ENCODE measurements at regions of chr6 and their contacts with region 1.

Region 1: DNA sequence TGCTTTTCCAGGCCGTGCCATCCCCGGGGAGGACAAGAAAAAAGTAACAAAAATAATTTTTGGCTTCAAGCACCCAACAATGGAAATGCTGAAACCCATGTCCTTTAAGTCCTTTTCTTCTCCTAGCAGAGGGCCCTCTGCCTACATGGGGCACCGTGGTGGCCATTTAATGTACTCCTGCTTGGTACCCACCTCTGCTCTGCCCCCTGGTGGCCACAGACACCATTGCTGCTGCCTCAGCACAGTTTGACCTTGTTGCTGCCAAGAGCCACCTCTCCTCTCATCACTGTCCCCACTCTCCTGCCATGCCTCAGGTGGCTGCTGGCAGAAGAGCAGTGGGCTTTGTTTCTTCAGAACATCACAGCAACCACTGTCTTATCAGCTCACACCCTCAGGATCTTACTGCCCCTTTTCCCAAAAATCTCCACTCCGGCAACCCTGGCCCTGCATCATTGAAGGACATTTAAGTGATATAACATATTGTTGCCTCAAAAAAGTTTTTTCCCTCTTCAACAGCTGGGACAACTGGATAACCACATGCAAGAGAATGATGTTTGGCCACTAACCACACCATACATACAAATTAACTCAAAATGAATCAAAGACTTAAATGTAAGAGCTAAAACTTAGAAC is 12.9 kb upstream of the ARMC2 start:
- DNase-seq: peak in 1 of 2 experiments; percentile 91
- H3K4me3 ChIP-seq: no peak overlapping the region
- H3K27ac ChIP-seq: no peak overlapping the region
- H3K4me1 ChIP-seq: peaks cover 3 to 8% (median 6%) of the 10 kb centered on the region in 4 experiments; a peak in 6 of 7 replicates
- H3K27me3 ChIP-seq: no peaks in the 10 kb centered on the region
- CTCF ChIP-seq: peak; percentile 93 to 99 (median 98)
- EP300 ChIP-seq: no peak
- POLR2A ChIP-seq: no peak
- RAD21 ChIP-seq: peak; percentile 87 to 92

Region 2: DNA sequence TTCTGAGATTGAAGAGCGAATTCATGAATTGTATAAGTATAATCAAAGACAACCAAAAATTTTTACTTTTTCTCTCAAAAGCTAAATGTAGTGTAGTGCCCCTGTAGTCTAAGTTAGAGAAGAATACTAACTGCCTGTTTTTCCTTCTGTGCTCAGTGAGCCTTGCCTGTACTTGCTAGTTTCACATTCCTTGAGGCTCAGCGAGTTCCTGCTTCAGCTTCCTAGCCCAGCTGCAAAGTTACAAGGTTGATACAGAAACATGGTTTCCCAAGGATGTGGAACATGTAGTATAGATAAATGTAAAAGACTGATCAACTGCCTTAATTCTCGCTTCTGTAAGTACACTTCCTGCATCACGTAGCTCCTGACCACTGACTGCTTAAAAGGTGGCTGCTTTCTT is 844.3 kb before region 1 on chr6:
- CTCF ChIA-PET with region 1: no interaction called
- POLR2A ChIA-PET with region 1: no interaction called
- DNase-seq: no peak
- H3K4me3 ChIP-seq: no peak overlapping the region
- H3K27ac ChIP-seq: no peak overlapping the region
- H3K4me1 ChIP-seq: peaks cover 0 to 19% (median 10%) of the 10 kb centered on the region in 4 experiments; a peak in 6 of 7 replicates
- H3K27me3 ChIP-seq: no peaks in the 10 kb centered on the region
- CTCF ChIP-seq: no peak
- EP300 ChIP-seq: no peak
- POLR2A ChIP-seq: no peak
- RAD21 ChIP-seq: no peak

Region 3: GRCh38 chr6:108531336-108531735 is 304.0 kb before region 1 on chr6:
- CTCF ChIA-PET with region 1: interaction called, 10 read pairs
- POLR2A ChIA-PET with region 1: no interaction called
- DNase-seq: no peak
- H3K4me3 ChIP-seq: no peak overlapping the region
- H3K27ac ChIP-seq: no peak overlapping the region
- H3K4me1 ChIP-seq: no peaks in the 10 kb centered on the region
- H3K27me3 ChIP-seq: no peaks in the 10 kb centered on the region
- CTCF ChIP-seq: peak; percentile 29 to 64 (median 60)
- EP300 ChIP-seq: no peak
- POLR2A ChIP-seq: no peak
- RAD21 ChIP-seq: peak; percentile 57 to 75

Region 4: GRCh38 chr6:108741331-108741989 is 93.9 kb before region 1 on chr6:
- CTCF ChIA-PET with region 1: no interaction called
- POLR2A ChIA-PET with region 1: no interaction called
- DNase-seq: no peak
- H3K4me3 ChIP-seq: no peak overlapping the region
- H3K27ac ChIP-seq: no peak overlapping the region
- H3K4me1 ChIP-seq: peaks cover 0 to 2% (median 1%) of the 10 kb centered on the region in 4 experiments; a peak in 3 of 7 replicates
- H3K27me3 ChIP-seq: peaks cover 0 to 3% (median 0%) of the 10 kb centered on the region in 4 experiments; a peak in 1 of 7 replicates
- CTCF ChIP-seq: no peak
- EP300 ChIP-seq: no peak
- POLR2A ChIP-seq: no peak
- RAD21 ChIP-seq: no peak

Region 5: GRCh38 chr6:108848116-108848868 is 13.0 kb after region 1 on chr6 and contains the start of gene ARMC2:
- CTCF ChIA-PET with region 1: interaction called, 39 read pairs
- POLR2A ChIA-PET with region 1: interaction called, 3 read pairs
- DNase-seq: peak; percentile 73 to 98
- H3K4me3 ChIP-seq: peak within 1 kb of the TSS; percentile 76 to 88 (median 81)
- H3K27ac ChIP-seq: 0 out of 2 replicates have a peak within 1 kb of the TSS, but pooled peaks have one; percentile 6
- H3K4me1 ChIP-seq: peaks cover 0 to 8% (median 0%) of the 10 kb centered on the region in 4 experiments; a peak in 2 of 7 replicates
- H3K27me3 ChIP-seq: no peaks in the 10 kb centered on the region
- CTCF ChIP-seq: no peak
- EP300 ChIP-seq: no peak
- POLR2A ChIP-seq: no peak
- RAD21 ChIP-seq: no peak
- total RNA-seq, gene ARMC2: 4.3 and 4.4 TPM in 2 replicates

Region 6: GRCh38 chr6:108883172-108883571 is 47.8 kb after region 1 on chr6:
- CTCF ChIA-PET with region 1: interaction called, 13 read pairs
- POLR2A ChIA-PET with region 1: interaction called, 3 read pairs
- DNase-seq: no peak
- H3K4me3 ChIP-seq: no peak overlapping the region
- H3K27ac ChIP-seq: no peak overlapping the region
- H3K4me1 ChIP-seq: no peaks in the 10 kb centered on the region
- H3K27me3 ChIP-seq: no peaks in the 10 kb centered on the region
- CTCF ChIP-seq: no peak
- EP300 ChIP-seq: no peak
- POLR2A ChIP-seq: no peak
- RAD21 ChIP-seq: no peak

Region 7: GRCh38 chr6:108896111-108896661 is 60.9 kb after region 1 on chr6:
- CTCF ChIA-PET with region 1: interaction called, 20 read pairs
- POLR2A ChIA-PET with region 1: no interaction called
- DNase-seq: no peak
- H3K4me3 ChIP-seq: no peak overlapping the region
- H3K27ac ChIP-seq: no peak overlapping the region
- H3K4me1 ChIP-seq: no peaks in the 10 kb centered on the region
- H3K27me3 ChIP-seq: no peaks in the 10 kb centered on the region
- CTCF ChIP-seq: no peak
- EP300 ChIP-seq: no peak
- POLR2A ChIP-seq: no peak
- RAD21 ChIP-seq: no peak

Region 8: GRCh38 chr6:109073344-109074132 is 238.2 kb after region 1 on chr6:
- CTCF ChIA-PET with region 1: interaction called, 49 read pairs
- POLR2A ChIA-PET with region 1: no interaction called
- DNase-seq: no peak
- H3K4me3 ChIP-seq: no peak overlapping the region
- H3K27ac ChIP-seq: no peak overlapping the region
- H3K4me1 ChIP-seq: no peaks in the 10 kb centered on the region
- H3K27me3 ChIP-seq: no peaks in the 10 kb centered on the region
- CTCF ChIP-seq: peak in 2 of 3 experiments; percentile 56 to 70; a peak in 3 of 4 replicates
- EP300 ChIP-seq: no peak
- POLR2A ChIP-seq: no peak
- RAD21 ChIP-seq: peak; percentile 88 to 92